T-cell (primary cell): ENCODE measurements at regions of chr10 and their contacts with region 1.

Region 1: GRCh38 chr10:77989081-77989724 is 40.1 kb downstream of the POLR3A start:
- DNase-seq: no peak
- ATAC-seq: no peak
- H3K4me3 ChIP-seq: no peak overlapping the region
- H3K4me3 Mint-ChIP-seq: no peak overlapping the region
- H3K27ac ChIP-seq: no peak overlapping the region
- H3K27ac Mint-ChIP-seq: no peak overlapping the region
- H3K4me1 ChIP-seq: no peaks in the 10 kb centered on the region
- H3K4me1 Mint-ChIP-seq: no peaks in the 10 kb centered on the region
- H3K27me3 ChIP-seq: no peaks in the 10 kb centered on the region
- H3K27me3 Mint-ChIP-seq: no peaks in the 10 kb centered on the region

Region 2: DNA sequence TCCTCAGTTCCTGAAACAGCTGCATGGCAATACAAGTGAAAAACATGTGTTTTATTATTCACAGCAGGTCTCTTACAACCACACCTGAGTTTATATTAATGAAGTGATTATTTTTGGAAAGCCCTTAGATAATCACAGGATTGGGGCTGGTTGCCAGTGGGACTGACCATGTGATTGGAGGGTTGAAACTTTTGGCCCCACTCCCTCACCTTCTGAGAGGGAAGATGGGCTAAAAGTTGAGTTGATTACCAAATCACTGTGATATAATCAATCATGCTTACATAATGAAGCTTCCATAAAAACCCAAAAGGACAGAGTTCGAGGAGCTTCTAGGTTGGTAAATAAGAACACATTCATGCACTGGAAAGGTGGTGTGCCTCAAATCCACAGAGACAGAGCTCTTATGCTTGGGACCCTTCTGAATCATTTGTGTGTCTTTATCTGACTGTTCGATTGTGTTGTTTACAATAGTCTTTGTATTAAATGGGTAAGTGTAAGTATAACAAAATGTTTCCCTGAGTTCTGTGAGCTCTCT is 438.4 kb after region 1 on chr10:
- CTCF ChIA-PET with region 1: interaction called in 1 of 2 experiments, 11 read pairs
- POLR2A ChIA-PET with region 1: no interaction called
- DNase-seq: no peak
- ATAC-seq: no peak
- H3K4me3 ChIP-seq: no peak overlapping the region
- H3K4me3 Mint-ChIP-seq: no peak overlapping the region
- H3K27ac ChIP-seq: no peak overlapping the region
- H3K27ac Mint-ChIP-seq: no peak overlapping the region
- H3K4me1 ChIP-seq: no peaks in the 10 kb centered on the region
- H3K4me1 Mint-ChIP-seq: no peaks in the 10 kb centered on the region
- H3K27me3 ChIP-seq: peaks cover 0 to under 1% of the 10 kb centered on the region in 2 experiments
- H3K27me3 Mint-ChIP-seq: peaks cover 15 to 22% of the 10 kb centered on the region in 2 donors